WTC11 (cell line): ENCODE measurements at regions of chr6 and their contacts with region 1.

Region 1: DNA sequence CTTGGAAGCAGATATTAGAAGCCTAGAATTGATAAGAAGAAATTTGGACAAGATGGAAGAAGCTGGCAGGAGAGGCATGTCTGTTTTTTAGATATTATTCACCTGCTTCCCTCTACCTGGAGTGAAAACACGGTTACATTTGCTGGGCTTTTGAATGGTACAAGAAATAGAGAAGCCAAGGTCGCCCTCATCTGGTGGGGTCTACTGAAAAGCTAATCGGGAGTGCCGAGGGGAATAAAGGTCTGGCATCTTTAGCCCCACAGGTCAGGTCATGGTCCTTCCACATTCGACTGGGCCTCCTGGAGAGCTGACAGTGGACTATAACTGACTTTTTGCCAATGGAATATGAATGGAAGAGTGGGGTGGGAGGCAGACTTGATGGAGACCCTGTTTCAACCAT is 4.6 kb upstream of the C2 start:
- DNase-seq: peak; percentile 50
- ATAC-seq: peak; percentile 87
- H3K4me3 Mint-ChIP-seq: no peak overlapping the region
- H3K27ac Mint-ChIP-seq: no peak overlapping the region
- H3K4me1 Mint-ChIP-seq: no peaks in the 10 kb centered on the region
- H3K27me3 Mint-ChIP-seq: peaks cover 15% of the 10 kb centered on the region
- CTCF ChIP-seq: no peak

Region 2: DNA sequence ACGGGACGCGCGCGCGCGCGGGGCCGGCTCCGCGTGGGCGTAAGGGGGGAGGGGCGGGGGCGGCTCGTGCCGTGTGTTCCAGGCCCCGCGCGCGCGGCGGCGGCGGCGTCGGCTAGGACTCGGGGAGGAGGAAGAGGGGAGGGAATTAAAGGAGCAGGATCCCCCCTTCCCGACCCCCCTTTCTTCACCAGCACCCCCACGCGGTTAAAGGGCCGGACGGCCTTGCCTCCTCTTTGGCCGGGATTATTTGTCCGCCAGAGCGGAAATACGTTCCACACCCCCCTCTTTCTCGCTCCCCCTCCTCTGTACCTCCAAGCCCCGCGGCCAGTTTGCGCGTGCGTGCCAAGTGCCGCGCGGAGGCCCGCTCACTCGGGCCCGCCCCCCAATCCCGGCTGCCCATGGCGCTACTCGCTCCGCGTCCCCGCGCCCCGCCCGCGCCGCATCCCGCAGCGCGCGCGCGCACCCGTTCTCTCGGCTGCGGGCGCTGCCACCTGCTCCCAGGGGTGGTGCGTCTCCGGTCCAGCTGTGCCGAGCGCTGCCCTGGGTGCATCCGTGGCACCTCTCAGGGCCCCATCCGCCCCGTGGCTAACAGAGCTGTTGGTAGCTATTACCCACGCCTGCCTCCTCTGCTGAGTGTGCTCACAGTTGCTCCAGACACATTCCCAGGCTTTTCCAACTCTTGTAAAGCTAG is 20.8 kb before region 1 on chr6 and contains the start of gene ZBTB12:
- CTCF ChIA-PET with region 1: interaction called, 22 read pairs
- POLR2A ChIA-PET with region 1: interaction called, 3 read pairs
- DNase-seq: peak; percentile 96
- ATAC-seq: peak; percentile 57
- H3K4me3 Mint-ChIP-seq: peak within 1 kb of the TSS; percentile 80
- H3K27ac Mint-ChIP-seq: peak within 1 kb of the TSS; percentile 96
- H3K4me1 Mint-ChIP-seq: peaks cover 25% of the 10 kb centered on the region
- H3K27me3 Mint-ChIP-seq: peaks cover 5% of the 10 kb centered on the region
- CTCF ChIP-seq: no peak
- total RNA-seq, gene ZBTB12: 24.0 to 46.2 TPM (median 44.1 TPM) in 3 replicates

Region 3: DNA sequence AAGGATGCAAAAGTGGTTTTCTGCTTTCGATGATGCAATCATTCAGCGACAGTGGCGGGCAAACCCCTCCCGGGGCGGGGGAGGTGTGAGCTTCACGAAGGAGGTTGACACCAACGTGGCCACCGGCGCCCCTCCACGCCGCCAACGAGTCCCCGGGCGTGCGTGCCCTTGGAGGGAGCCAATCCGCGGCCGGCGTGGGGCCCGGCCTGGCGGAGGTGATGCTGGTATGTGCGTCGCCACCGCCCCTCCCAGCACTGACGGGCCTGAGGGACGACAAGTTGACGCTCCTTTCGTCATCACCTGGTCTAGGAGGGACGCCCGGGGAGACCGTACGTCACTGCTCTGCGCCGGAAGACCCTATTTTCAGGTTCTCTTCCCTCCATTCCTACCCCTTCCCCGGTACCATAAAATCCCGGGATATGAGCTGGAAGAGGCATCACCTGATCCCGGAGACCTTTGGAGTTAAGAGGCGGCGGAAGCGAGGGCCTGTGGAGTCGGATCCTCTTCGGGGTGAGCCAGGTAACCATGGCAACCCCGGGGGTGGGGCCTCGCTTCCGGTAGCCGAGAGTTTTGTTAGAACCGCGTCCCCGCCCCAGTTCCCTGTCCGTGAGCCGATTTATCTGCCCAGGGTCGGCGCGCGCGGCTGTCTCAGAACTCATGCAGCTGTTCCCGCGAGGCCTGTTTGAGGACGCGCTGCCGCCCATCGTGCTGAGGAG is 49.2 kb after region 1 on chr6 and contains the start of gene DXO:
- CTCF ChIA-PET with region 1: no interaction called
- POLR2A ChIA-PET with region 1: no interaction called
- DNase-seq: peak; percentile 93
- ATAC-seq: peak; percentile 88
- H3K4me3 Mint-ChIP-seq: peak within 1 kb of the TSS; percentile 84
- H3K27ac Mint-ChIP-seq: peak within 1 kb of the TSS; percentile 99
- H3K4me1 Mint-ChIP-seq: peaks cover 12% of the 10 kb centered on the region
- H3K27me3 Mint-ChIP-seq: no peaks in the 10 kb centered on the region
- CTCF ChIP-seq: no peak
- total RNA-seq, gene DXO: 13.8 to 16.5 TPM (median 15.7 TPM) in 3 replicates